ENCODE measurements at regions of chrX and their contacts with region 1.

Region 1: DNA sequence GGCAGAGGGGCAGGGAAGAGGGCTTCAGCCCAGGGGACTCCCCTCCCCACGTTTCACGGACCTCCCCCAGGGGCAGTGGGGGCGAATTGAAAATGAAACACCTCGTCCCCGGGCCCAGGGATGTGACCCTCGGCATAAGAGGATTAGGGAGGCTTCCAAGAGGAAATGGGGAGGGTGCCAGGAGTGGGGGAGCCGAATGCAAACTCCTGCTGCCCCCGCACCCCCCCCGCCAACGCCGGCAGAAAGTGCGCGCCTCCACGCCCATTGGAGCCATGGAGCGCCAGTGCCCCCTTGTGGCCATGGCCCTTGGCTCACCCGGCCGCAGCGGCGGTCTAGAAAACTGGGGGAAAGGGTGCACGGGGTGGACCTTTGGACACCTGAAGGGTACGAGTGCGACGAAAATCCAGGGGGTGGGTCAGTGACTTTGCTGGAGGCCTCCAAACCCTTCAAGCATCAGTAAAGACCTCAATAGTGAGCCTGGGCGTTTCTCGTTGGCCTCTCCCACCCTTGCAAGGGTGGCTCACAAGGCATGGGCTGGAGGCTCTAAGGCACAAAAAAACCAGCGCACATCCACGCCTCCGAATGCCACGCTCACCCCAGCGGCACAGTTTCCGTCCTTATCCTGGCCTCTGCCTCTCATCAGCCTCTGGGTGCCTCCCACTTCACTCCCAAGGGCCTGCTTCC is 120.8 kb upstream of the PJA1 start:
- DNase-seq: peak; percentile 32
- H3K4me3 ChIP-seq: peak overlapping the region; percentile 16 to 21
- H3K27ac ChIP-seq: peak overlapping the region; percentile 49 to 62
- H3K4me1 ChIP-seq: no peaks in the 10 kb centered on the region
- H3K27me3 ChIP-seq: no peaks in the 10 kb centered on the region
- CTCF ChIP-seq: peak; percentile 36 to 80 (median 75)
- POLR2A ChIP-seq: no peak

Region 2: DNA sequence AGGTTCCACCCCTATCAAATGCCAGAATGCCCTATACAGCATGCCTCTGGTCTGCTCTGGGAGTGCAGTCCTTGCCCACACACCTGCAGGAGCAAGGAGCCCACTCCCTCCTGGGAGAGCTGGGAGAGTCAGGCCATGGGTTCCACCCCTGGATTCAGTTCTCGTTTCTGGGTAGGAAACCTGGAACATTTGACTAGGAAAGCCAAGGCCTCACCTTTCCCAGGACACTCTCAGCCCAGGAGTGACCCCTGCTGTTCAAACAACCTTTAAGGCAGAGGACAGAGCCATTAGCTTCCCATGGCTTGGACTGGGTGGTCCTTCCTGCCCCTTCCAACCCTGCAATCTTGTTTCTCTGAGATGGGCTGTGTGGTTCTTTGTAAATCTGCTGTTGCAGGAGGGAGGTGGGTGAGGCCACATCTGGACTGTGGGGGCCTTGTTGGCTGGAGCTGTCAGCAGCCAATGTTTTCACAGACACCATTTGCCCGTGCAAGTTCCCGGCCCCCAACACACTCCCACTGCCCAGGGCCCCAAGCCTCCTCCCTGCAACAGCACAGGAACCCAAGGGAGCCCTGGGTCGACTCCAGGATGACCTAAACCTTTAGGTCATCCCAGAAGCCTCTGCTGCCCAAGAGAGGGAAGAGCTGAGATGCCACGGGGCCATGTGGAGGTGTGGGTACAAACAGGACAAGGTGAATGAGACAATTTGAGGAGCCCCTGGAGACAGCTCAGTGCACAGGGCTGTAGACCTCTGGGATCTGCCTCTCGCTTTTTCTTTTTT is 225.2 kb before region 1 on chrX:
- intact Hi-C with region 1: loop called (anchors 10 kb)
- DNase-seq: peak; percentile 18
- H3K4me3 ChIP-seq: no peak overlapping the region
- H3K27ac ChIP-seq: no peak overlapping the region
- H3K4me1 ChIP-seq: no peaks in the 10 kb centered on the region
- H3K27me3 ChIP-seq: no peaks in the 10 kb centered on the region
- CTCF ChIP-seq: peak in 3 of 4 experiments; percentile 30 to 46 (median 41)
- POLR2A ChIP-seq: no peak

Region 3: DNA sequence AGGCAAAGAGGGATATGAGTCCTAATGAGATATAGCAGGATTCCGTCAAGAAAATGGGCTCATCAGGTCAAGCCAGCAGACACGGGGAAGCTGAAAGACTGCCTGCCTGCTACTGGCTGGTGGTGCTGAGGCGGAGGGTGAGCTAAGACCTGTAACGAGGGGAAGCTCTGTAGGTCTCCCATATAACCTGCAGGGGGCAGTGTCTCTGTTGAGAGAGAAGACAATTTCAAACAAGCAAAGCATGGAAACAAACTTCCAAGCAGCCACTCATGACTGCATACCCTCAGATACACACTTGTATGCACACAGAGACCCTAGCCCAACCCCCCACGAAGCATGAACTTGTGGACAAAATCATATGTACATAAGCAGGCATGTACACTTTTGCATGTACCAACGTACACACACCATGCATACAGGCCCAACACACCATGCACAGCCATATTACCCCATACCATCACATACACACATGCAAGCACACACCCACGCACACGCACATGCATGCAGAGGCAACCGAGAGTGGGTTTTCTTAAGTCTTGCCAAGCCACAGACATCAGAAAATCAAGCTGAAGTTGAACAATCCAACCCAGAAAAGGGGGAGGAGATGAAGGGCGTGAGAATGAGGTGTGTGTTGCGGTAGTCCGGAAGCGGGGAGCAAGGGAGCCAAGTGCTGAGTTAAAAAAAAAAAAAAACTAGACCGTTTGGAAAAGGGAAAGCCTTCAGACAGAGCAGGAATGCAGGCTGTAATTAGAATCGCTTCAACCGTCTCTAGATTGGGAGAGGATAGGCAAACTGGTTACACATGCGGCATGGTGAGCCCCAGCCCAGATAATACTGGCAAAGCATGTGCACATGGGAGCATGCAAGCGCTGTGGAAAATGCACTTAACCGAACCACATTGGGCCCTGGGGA is 191.8 kb before region 1 on chrX:
- intact Hi-C with region 1: loop called (anchors 10 kb)
- DNase-seq: peak; percentile 8
- H3K4me3 ChIP-seq: no peak overlapping the region
- H3K27ac ChIP-seq: no peak overlapping the region
- H3K4me1 ChIP-seq: no peaks in the 10 kb centered on the region
- H3K27me3 ChIP-seq: no peaks in the 10 kb centered on the region
- CTCF ChIP-seq: peak in 3 of 4 experiments; percentile 31 to 52 (median 38)
- POLR2A ChIP-seq: no peak

Region 4: DNA sequence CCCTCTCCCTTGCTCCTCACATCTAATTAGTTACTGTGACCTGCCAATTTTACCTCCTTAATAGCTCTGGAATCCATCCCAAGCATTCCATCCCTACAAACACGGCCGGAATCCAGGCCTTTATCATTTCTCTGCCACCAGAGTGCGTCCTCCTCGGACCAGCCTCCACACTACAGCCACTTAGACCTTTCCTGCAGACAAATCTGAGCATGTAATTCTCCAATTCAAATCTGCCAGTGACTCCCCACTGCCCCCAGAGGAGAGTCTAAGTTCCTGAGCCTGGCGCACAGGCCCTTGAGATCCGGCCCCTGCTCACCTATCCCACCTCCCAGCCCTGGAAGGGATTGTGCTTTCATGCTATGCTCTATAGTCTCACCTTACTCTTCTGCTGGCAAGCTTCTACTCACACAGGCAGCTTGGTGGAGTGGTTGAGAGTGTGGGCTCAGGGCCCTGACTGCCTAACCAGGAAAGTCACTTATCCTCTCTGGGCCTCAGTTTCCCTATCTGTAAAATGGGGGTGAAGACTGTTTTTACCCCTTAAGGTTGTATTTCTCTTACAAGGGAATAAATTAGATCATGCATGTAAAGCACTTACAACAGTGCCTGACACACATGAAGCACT is 152.0 kb before region 1 on chrX:
- intact Hi-C with region 1: loop called (anchors 10 kb)
- DNase-seq: peak; percentile 4
- H3K4me3 ChIP-seq: no peak overlapping the region
- H3K27ac ChIP-seq: no peak overlapping the region
- H3K4me1 ChIP-seq: no peaks in the 10 kb centered on the region
- H3K27me3 ChIP-seq: no peaks in the 10 kb centered on the region
- CTCF ChIP-seq: peak in 3 of 4 experiments; percentile 16 to 40 (median 19)
- POLR2A ChIP-seq: no peak

Region 5: GRCh38 chrX:69158166-69158980 is 127.7 kb before region 1 on chrX:
- intact Hi-C with region 1: loop called (anchors 5 kb)
- DNase-seq: peak; percentile 17
- H3K4me3 ChIP-seq: no peak overlapping the region
- H3K27ac ChIP-seq: no peak overlapping the region
- H3K4me1 ChIP-seq: no peaks in the 10 kb centered on the region
- H3K27me3 ChIP-seq: no peaks in the 10 kb centered on the region
- CTCF ChIP-seq: peak in 2 of 4 experiments; percentile 30 to 35
- POLR2A ChIP-seq: no peak